ENCODE measurements at regions of chr9 and their contacts with region 1.

Region 1: DNA sequence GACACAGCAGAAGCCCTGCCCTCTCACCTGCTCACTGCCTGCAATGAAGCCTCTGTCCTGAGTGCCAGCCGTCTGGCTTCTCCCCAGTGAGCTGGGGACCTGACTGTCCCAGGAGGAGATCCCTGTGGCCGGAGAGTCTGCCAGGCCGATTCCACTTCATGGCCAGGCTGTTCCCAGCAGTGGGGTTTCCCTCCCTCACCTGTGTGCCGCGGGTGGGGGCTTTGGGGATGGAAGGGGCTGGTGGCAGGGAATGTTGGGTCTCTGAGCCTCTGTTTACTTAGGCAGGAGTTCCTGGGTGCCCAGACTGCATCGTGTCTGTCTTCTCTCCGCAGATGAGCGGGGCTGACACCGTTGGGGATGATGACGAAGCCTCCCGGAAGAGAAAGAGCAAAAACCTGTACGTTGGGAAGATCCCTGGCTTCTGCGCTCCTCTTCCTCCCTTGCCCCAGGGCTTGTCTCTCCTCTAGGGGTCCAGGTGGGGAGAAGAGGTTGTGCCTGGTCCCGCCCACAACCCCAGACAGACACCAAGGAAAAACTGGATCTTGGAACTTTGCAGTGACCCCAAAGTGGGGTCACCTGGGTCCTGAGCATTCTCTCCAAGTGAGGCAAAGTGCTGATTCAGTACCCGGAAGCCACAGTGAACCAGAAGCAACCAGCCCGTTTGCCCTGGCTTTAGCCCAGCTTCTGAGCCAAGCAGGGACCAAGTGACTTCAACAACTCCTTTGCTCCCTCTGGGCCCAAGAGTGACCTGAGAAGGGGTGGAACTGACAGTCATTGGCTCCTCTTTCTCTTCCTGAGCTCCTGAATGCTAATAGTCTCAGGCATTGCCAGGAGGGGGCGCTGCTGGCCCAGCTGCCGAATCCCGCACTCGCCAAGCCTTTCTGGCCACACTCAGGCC is 127.7 kb downstream of the RGS3 start:
- DNase-seq: no peak
- H3K4me3 ChIP-seq: no peak overlapping the region
- H3K27ac ChIP-seq: no peak overlapping the region
- H3K27me3 ChIP-seq: no peaks in the 10 kb centered on the region
- CTCF ChIP-seq: peak; percentile 96

Region 2: DNA sequence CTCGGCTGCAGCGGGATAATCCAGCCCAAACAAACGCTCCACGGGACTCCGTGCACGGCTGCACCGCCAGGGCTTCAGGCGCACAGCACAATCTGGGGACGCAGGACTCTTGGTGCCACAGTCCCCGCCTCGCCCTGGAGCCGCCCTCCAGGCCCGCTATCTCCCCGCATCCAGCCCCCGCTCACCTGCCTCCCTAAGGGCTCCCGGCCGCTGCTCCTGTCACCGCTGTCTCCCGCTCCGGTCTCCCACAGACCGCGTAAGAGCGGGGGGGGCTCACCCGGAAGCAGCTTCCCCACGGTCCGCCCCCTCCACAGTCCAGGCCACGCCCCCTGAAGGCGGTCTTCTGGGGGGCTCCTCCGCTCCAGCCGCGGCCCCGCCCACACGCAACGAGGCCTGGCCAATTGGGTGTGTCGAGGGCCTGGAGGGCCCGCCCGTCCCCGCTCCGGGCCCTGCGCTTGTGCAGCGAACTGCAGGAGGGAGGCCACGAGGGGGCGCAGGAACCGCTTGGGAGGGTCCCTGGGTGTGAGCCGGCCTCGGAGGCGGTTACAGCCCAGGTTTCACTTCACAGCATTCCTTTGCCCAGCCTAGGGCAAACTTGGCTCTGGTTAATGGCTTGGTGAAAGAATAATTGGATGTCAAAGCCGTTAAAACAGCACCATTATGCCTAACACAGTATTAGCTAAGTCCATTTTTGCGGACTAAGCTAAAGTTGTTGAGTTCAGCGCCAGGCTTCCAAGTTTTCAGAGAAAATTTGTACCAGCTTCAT is 190.0 kb before region 1 on chr9 and contains the start of gene ALAD:
- CTCF ChIA-PET with region 1: interaction called, 32 read pairs
- POLR2A ChIA-PET with region 1: interaction called, 3 read pairs
- DNase-seq: peak; percentile 94
- H3K4me3 ChIP-seq: peak within 1 kb of the TSS; percentile 94
- H3K27ac ChIP-seq: peak within 1 kb of the TSS; percentile 39
- H3K27me3 ChIP-seq: no peaks in the 10 kb centered on the region
- CTCF ChIP-seq: peak; percentile 90
- polyA plus RNA-seq, gene ALAD: 11.8 and 15.9 TPM in 2 replicates

Region 3: GRCh38 chr9:113446323-113446740 is 144.9 kb before region 1 on chr9:
- CTCF ChIA-PET with region 1: interaction called, 237 read pairs
- POLR2A ChIA-PET with region 1: interaction called, 4 read pairs
- DNase-seq: no peak
- H3K4me3 ChIP-seq: no peak overlapping the region
- H3K27ac ChIP-seq: no peak overlapping the region
- H3K27me3 ChIP-seq: no peaks in the 10 kb centered on the region
- CTCF ChIP-seq: peak; percentile 57

Region 4: GRCh38 chr9:113454914-113455761 is 136.1 kb before region 1 on chr9:
- CTCF ChIA-PET with region 1: interaction called, 237 read pairs
- POLR2A ChIA-PET with region 1: no interaction called
- DNase-seq: peak; percentile 79
- H3K4me3 ChIP-seq: no peak overlapping the region
- H3K27ac ChIP-seq: peak overlapping the region; percentile 96
- H3K27me3 ChIP-seq: no peaks in the 10 kb centered on the region
- CTCF ChIP-seq: no peak

Region 5: GRCh38 chr9:113578882-113579282 is 12.4 kb before region 1 on chr9:
- CTCF ChIA-PET with region 1: interaction called, 17 read pairs
- POLR2A ChIA-PET with region 1: interaction called, 5 read pairs
- DNase-seq: no peak
- H3K4me3 ChIP-seq: no peak overlapping the region
- H3K27ac ChIP-seq: peak overlapping the region; percentile 81
- H3K27me3 ChIP-seq: no peaks in the 10 kb centered on the region
- CTCF ChIP-seq: no peak

Region 6: GRCh38 chr9:113622600-113623400 is 31.6 kb after region 1 on chr9:
- CTCF ChIA-PET with region 1: interaction called, 6 read pairs
- POLR2A ChIA-PET with region 1: interaction called, 21 read pairs
- DNase-seq: no peak
- H3K4me3 ChIP-seq: no peak overlapping the region
- H3K27ac ChIP-seq: peak overlapping the region; percentile 71
- H3K27me3 ChIP-seq: no peaks in the 10 kb centered on the region
- CTCF ChIP-seq: no peak

Region 7: GRCh38 chr9:113648586-113649453 is 57.6 kb after region 1 on chr9:
- CTCF ChIA-PET with region 1: interaction called, 767 read pairs
- POLR2A ChIA-PET with region 1: interaction called, 10 read pairs
- DNase-seq: no peak
- H3K4me3 ChIP-seq: no peak overlapping the region
- H3K27ac ChIP-seq: no peak overlapping the region
- H3K27me3 ChIP-seq: no peaks in the 10 kb centered on the region
- CTCF ChIP-seq: 0 out of 2 replicates have a peak, but pooled peaks have one; percentile 5

Region 8: GRCh38 chr9:113943112-113944009 is 352.1 kb after region 1 on chr9:
- CTCF ChIA-PET with region 1: no interaction called
- POLR2A ChIA-PET with region 1: no interaction called
- DNase-seq: no peak
- H3K4me3 ChIP-seq: no peak overlapping the region
- H3K27ac ChIP-seq: no peak overlapping the region
- H3K27me3 ChIP-seq: no peaks in the 10 kb centered on the region
- CTCF ChIP-seq: no peak